GM12878 (cell line): ENCODE measurements at regions of chr15 and their contacts with region 1.

Region 1: GRCh38 chr15:65421360-65422070 is 1.2 kb downstream of the IGDCC4 start:
- DNase-seq: no peak
- ATAC-seq: peak; percentile 86
- H3K4me3 ChIP-seq: peak overlapping the region; percentile 58; the same call in 1 of the 2 replicates
- H3K27ac ChIP-seq: peak overlapping the region; percentile 18; the same call in 1 of the 2 replicates
- H3K4me1 ChIP-seq: peaks cover 7% of the 10 kb centered on the region
- H3K27me3 ChIP-seq: peaks cover 2 to 11% of the 10 kb centered on the region in 2 experiments
- CTCF ChIP-seq: no peak
- EP300 ChIP-seq: peak; percentile 19 to 30; a peak in 2 of 4 replicates
- POLR2A ChIP-seq: 0 out of 2 replicates have a peak, but pooled peaks have one; percentile 26
- RAD21 ChIP-seq: no peak

Region 2: DNA sequence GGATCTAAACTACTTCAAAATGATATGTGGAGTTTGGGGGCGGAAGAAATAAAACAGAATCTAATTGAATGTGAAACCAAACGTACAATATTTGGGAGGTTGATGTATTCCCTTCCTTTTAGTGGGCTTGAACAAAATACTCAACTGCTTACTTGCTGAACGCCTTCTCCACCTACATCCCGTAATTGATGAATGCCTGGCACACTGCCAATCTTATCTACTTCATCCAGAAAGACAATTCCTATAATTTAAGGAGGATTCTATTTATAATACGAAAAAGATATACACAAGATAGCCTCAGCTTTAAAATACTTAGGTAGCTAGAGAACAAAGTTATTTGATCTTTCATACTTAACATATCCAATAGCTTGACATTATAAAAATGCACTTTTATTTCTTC is 264.8 kb before region 1 on chr15:
- CTCF ChIA-PET with region 1: no interaction called
- POLR2A ChIA-PET with region 1: no interaction called
- RAD21 ChIA-PET with region 1: no interaction called
- SMC1A ChIA-PET with region 1: no interaction called
- in situ Hi-C with region 1: no loop called
- intact Hi-C with region 1: no loop called
- DNase-seq: no peak
- ATAC-seq: no peak
- H3K4me3 ChIP-seq: no peak overlapping the region
- H3K27ac ChIP-seq: no peak overlapping the region
- H3K4me1 ChIP-seq: no peaks in the 10 kb centered on the region
- H3K27me3 ChIP-seq: no peaks in the 10 kb centered on the region
- CTCF ChIP-seq: no peak
- EP300 ChIP-seq: no peak
- POLR2A ChIP-seq: no peak
- RAD21 ChIP-seq: no peak

Region 3: DNA sequence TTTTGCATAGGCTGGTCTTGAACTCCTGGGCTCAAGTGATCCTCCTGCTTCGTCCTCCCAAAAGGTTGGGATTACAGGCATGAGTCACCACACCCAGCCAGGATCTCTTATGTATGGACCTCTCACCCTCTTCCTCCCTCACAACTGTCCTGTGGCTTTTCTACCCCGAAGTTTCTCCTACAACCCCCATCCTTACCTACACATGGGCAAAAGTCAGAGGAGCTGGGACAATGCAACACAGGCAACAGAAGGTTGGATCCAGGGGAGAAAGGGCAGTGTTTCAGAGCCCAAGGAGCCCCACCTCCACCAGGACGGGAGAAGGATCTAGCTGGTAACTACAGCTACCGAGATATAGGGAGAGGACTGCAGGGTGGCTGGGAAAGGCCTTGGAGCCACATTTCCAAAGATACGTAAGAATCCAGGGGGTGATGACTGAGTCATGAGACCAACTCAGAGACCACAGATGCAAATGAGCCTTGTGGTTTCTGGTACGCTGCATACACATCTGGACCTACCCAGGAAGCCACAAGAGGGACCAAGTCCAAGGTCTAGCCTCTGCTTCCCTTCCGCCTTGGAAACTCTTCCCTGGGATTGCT is 12.4 kb before region 1 on chr15:
- CTCF ChIA-PET with region 1: interaction called, 11 read pairs
- POLR2A ChIA-PET with region 1: interaction called, 14 read pairs
- RAD21 ChIA-PET with region 1: interaction called, 12 read pairs
- SMC1A ChIA-PET with region 1: interaction called, 38 read pairs
- in situ Hi-C with region 1: no loop called
- intact Hi-C with region 1: no loop called
- DNase-seq: no peak
- ATAC-seq: peak; percentile 63
- H3K4me3 ChIP-seq: no peak overlapping the region
- H3K27ac ChIP-seq: peak overlapping the region; percentile 9; the same call in 1 of the 2 replicates
- H3K4me1 ChIP-seq: peaks cover 24% of the 10 kb centered on the region
- H3K27me3 ChIP-seq: no peaks in the 10 kb centered on the region
- CTCF ChIP-seq: no peak
- EP300 ChIP-seq: peak; percentile 43 to 54; a peak in 1 of 4 replicates
- POLR2A ChIP-seq: no peak
- RAD21 ChIP-seq: no peak